Dorsolateral prefrontal cortex (tissue), 120 donors: ENCODE measurements at regions of chr2 and their contacts with region 1.

Region 1: GRCh38 chr2:203804070-203804469 is 63.5 kb upstream of the CTLA4 start:
- DNase-seq: peak in 6 of 10 donors; percentile 26 to 67 (median 55)
- H3K4me3 ChIP-seq: no peak overlapping the region
- H3K27ac ChIP-seq: peak overlapping the region in 7 of 59 donors; percentile 11 to 76 (median 51)
- H3K27me3 ChIP-seq: no peaks in the 10 kb centered on the region
- CTCF ChIP-seq: no peak

Region 2: GRCh38 chr2:203484266-203485112 is 319.6 kb before region 1 on chr2:
- intact Hi-C with region 1: loop called in 1 of 2 experiments (anchors 10 kb)
- DNase-seq: peak in 1 of 10 donors; percentile 24
- H3K4me3 ChIP-seq: no peak overlapping the region
- H3K27ac ChIP-seq: no peak overlapping the region
- H3K27me3 ChIP-seq: no peaks in the 10 kb centered on the region
- CTCF ChIP-seq: peak in 54 of 56 donors; percentile 28 to 78 (median 62)

Region 3: GRCh38 chr2:203583701-203584100 is 220.4 kb before region 1 on chr2:
- intact Hi-C with region 1: loop called in 1 of 2 experiments (anchors 5 kb)
- DNase-seq: no peak
- H3K4me3 ChIP-seq: no peak overlapping the region
- H3K27ac ChIP-seq: peak overlapping the region in 2 of 59 donors; percentile 24 to 31
- H3K27me3 ChIP-seq: no peaks in the 10 kb centered on the region
- CTCF ChIP-seq: no peak